Breast epithelium (tissue), 4 donors: ENCODE measurements at regions of chr16 and their contacts with region 1.

Region 1: DNA sequence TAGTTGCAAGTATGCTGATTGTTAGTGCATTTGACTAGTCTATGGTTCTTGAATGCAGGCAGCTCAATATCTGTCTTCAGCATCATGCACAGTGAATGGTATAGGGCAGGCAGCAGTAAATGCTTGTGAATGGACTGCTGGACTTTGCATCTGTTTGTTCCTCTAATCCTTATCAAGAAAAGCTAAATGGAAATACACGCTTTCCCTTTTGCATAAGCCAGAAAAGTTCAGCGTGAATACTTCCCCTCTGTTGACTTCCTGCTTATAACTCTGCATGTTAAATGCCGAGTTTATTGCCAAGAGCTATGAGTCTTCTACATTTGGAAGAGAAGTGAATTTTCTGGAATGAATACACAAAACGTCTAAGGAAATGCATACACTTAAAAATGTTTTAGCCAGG is 127.9 kb upstream of the CPHXL start:
- DNase-seq: no peak
- H3K4me3 ChIP-seq: no peak overlapping the region
- H3K27ac ChIP-seq: no peak overlapping the region
- H3K4me1 ChIP-seq: no peaks in the 10 kb centered on the region
- H3K27me3 ChIP-seq: no peaks in the 10 kb centered on the region
- CTCF ChIP-seq: no peak
- POLR2A ChIP-seq: no peak

Region 2: DNA sequence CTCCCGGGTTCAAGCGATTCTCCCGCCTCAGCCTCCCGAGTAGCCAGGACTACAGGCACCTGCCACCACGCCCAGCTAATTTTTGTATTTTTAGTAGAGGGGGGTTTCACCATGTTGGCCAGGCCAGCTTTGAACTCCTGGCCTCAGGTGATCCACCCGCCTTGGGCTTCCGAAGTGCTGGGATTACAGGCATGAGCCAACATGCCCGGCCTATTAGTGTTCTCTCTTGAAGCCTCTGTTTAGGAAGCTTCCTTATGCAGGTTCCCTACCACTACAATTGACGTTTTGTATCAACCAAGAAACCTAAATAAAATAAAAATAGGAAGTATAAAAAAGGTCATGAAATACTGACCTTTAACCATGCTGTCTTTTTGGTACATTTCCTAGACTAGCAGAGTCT is 334.3 kb before region 1 on chr16:
- intact Hi-C with region 1: no loop called
- DNase-seq: no peak
- H3K4me3 ChIP-seq: no peak overlapping the region
- H3K27ac ChIP-seq: no peak overlapping the region
- H3K4me1 ChIP-seq: no peaks in the 10 kb centered on the region
- H3K27me3 ChIP-seq: no peaks in the 10 kb centered on the region
- CTCF ChIP-seq: no peak
- POLR2A ChIP-seq: no peak

Region 3: GRCh38 chr16:76900285-76901263 is 1046.4 kb after region 1 on chr16:
- intact Hi-C with region 1: loop called (anchors 5 kb)
- DNase-seq: no peak
- H3K4me3 ChIP-seq: no peak overlapping the region
- H3K27ac ChIP-seq: no peak overlapping the region
- H3K4me1 ChIP-seq: no peaks in the 10 kb centered on the region
- H3K27me3 ChIP-seq: no peaks in the 10 kb centered on the region
- CTCF ChIP-seq: no peak
- POLR2A ChIP-seq: no peak